ENCODE measurements at regions of chr5 and their contacts with region 1.

Region 1: GRCh38 chr5:177351385-177352329 is at the start of gene LMAN2:
- DNase-seq: peak; percentile 85 to 96 (median 95)
- H3K4me3 ChIP-seq: peak within 1 kb of the TSS; percentile 63 to 100 (median 97)
- H3K27ac ChIP-seq: peak within 1 kb of the TSS; percentile 72 to 99 (median 96)
- H3K27me3 ChIP-seq: no peaks in the 10 kb centered on the region
- CTCF ChIP-seq: peak in 15 of 56 donors; percentile 8 to 35 (median 18)
- total RNA-seq, gene LMAN2: 37.8 to 73.4 (median 52.2) TPM

Region 2: GRCh38 chr5:177311723-177312648 is 39.7 kb before region 1 on chr5 and contains the start of gene MXD3:
- intact Hi-C with region 1: loop called (anchors 5 kb)
- DNase-seq: peak; percentile 89 to 98 (median 95)
- H3K4me3 ChIP-seq: peak within 1 kb of the TSS; percentile 39 to 81 (median 67)
- H3K27ac ChIP-seq: no peak within 1 kb of the TSS
- H3K27me3 ChIP-seq: no peaks in the 10 kb centered on the region
- CTCF ChIP-seq: peak in 3 of 56 donors; percentile 7 to 17 (median 16)
- total RNA-seq, gene MXD3: 2.1 to 12.7 (median 5.8) TPM

Region 3: GRCh38 chr5:177599731-177600507 is 248.3 kb after region 1 on chr5 and contains the start of gene B4GALT7:
- intact Hi-C with region 1: loop called in 1 of 2 experiments (anchors 10 kb)
- DNase-seq: peak; percentile 61 to 94 (median 74)
- H3K4me3 ChIP-seq: peak within 1 kb of the TSS; percentile 72 to 99 (median 88)
- H3K27ac ChIP-seq: peak within 1 kb of the TSS; percentile 34 to 95 (median 85)
- H3K27me3 ChIP-seq: no peaks in the 10 kb centered on the region
- CTCF ChIP-seq: peak in 12 of 56 donors; percentile 3 to 38 (median 18)
- total RNA-seq, gene B4GALT7: 17.5 to 45.7 (median 25.3) TPM

Measured in dorsolateral prefrontal cortex (tissue), 120 donors.